CD8-positive, alpha-beta memory T cell (primary cell): ENCODE measurements at regions of chr22 and their contacts with region 1.

Region 1: GRCh38 chr22:17785185-17786184 is 11.2 kb upstream of the BID start:
- DNase-seq: peak; percentile 56 to 80 (median 66)
- H3K4me3 ChIP-seq: no peak overlapping the region
- H3K4me3 Mint-ChIP-seq: peak overlapping the region in 1 of 7 donors; percentile 69
- H3K27ac ChIP-seq: no peak overlapping the region
- H3K27ac Mint-ChIP-seq: peak overlapping the region in 5 of 8 donors; percentile 20 to 74 (median 63)
- H3K4me1 ChIP-seq: peaks cover 21% of the 10 kb centered on the region
- H3K4me1 Mint-ChIP-seq: peaks cover 12 to 25% (median 14%) of the 10 kb centered on the region in 3 donors
- H3K27me3 ChIP-seq: no peaks in the 10 kb centered on the region
- H3K27me3 Mint-ChIP-seq: no peaks in the 10 kb centered on the region

Region 2: GRCh38 chr22:17742527-17742902 is 43.0 kb before region 1 on chr22:
- CTCF ChIA-PET with region 1: interaction called, 110 read pairs
- POLR2A ChIA-PET with region 1: interaction called, 4 read pairs
- DNase-seq: peak; percentile 44 to 75 (median 51)
- H3K4me3 ChIP-seq: no peak overlapping the region
- H3K4me3 Mint-ChIP-seq: no peak overlapping the region
- H3K27ac ChIP-seq: no peak overlapping the region
- H3K27ac Mint-ChIP-seq: peak overlapping the region in 4 of 8 donors; percentile 4 to 80 (median 26)
- H3K4me1 ChIP-seq: no peaks in the 10 kb centered on the region
- H3K4me1 Mint-ChIP-seq: peaks cover 7 to 16% (median 12%) of the 10 kb centered on the region in 3 donors
- H3K27me3 ChIP-seq: no peaks in the 10 kb centered on the region
- H3K27me3 Mint-ChIP-seq: no peaks in the 10 kb centered on the region

Region 3: DNA sequence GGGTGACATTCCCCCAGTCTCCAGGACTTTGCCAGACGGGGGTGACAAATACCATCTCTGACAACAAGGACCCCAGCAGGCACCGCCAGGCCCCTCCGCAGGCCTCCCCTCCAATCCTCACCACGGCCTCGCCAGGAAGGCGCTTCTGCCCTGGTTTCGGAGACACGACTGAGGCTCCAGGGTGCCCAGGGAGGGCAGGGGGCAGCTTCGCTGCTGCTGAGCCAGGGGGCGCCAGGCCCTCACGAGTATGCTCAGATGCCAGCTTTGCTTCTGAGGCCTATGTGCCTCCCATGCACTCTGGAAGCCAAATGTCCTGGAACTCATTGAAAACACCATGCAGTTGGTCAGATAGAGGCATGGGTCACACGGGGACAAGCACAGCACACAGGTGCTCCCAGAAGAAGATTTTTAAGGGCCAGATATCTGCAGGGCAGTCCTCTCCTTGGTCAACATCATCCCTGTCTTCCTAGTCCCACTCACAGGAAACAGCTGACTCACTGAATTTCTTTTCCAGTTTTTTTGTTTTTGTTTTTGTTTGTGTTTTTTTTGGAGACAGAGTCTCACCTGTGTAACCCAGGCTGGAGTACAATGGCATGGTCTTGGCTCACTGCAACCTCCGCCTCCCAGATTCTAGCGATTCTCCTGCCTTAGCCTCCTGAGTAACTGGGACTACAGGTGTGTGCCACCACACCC is 31.1 kb before region 1 on chr22:
- CTCF ChIA-PET with region 1: interaction called, 17 read pairs
- POLR2A ChIA-PET with region 1: no interaction called
- DNase-seq: peak in 1 of 5 donors; percentile 62
- H3K4me3 ChIP-seq: no peak overlapping the region
- H3K4me3 Mint-ChIP-seq: no peak overlapping the region
- H3K27ac ChIP-seq: no peak overlapping the region
- H3K27ac Mint-ChIP-seq: peak overlapping the region in 4 of 8 donors; percentile 21 to 77 (median 64)
- H3K4me1 ChIP-seq: no peaks in the 10 kb centered on the region
- H3K4me1 Mint-ChIP-seq: peaks cover 5 to 28% (median 9%) of the 10 kb centered on the region in 3 donors
- H3K27me3 ChIP-seq: no peaks in the 10 kb centered on the region
- H3K27me3 Mint-ChIP-seq: no peaks in the 10 kb centered on the region

Region 4: DNA sequence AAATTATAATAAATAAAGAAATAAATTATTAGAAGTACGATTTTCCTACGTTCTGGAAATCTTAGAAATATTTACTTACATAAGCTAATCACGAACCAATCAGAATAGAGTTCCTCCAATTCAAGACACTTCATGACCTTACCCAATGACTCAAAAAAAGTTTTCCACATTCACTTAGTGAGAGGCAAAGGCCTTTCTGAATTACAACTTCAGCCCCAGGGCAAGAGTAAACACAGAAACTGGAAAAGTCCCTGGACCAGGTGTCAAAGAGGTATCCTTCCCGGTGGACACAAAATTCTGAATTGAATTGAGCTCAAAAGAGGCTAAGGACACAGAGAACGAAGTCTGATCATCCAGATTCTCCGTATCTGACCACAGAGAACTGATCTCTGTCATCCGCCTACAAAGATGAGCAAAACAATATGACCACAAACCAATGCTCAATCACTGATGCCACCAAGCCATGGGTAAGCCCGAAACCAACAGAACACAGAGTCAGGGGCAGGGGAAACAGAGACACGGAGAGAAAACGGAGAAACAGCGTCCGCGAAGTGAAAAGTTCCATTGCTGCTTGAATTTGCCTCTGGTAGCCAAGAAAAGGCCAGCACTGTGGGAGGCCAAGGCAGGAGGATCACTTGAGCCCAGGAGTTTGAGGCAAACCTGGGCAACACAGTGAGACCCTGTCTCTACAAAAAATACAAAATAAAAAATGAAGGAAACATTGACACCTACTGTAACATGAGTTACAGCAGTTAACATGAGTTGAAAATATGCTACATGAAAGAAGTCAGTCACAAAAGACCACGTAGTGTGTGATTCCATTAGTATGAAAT is 18.0 kb before region 1 on chr22:
- CTCF ChIA-PET with region 1: interaction called, 40 read pairs
- POLR2A ChIA-PET with region 1: no interaction called
- DNase-seq: peak in 3 of 5 donors; percentile 67 to 73 (median 72)
- H3K4me3 ChIP-seq: peak overlapping the region; percentile 26
- H3K4me3 Mint-ChIP-seq: peak overlapping the region; percentile 48 to 79 (median 71)
- H3K27ac ChIP-seq: no peak overlapping the region
- H3K27ac Mint-ChIP-seq: peak overlapping the region; percentile 62 to 99 (median 90)
- H3K4me1 ChIP-seq: peaks cover 26% of the 10 kb centered on the region
- H3K4me1 Mint-ChIP-seq: peaks cover 42 to 58% (median 55%) of the 10 kb centered on the region in 3 donors
- H3K27me3 ChIP-seq: no peaks in the 10 kb centered on the region
- H3K27me3 Mint-ChIP-seq: no peaks in the 10 kb centered on the region

Region 5: DNA sequence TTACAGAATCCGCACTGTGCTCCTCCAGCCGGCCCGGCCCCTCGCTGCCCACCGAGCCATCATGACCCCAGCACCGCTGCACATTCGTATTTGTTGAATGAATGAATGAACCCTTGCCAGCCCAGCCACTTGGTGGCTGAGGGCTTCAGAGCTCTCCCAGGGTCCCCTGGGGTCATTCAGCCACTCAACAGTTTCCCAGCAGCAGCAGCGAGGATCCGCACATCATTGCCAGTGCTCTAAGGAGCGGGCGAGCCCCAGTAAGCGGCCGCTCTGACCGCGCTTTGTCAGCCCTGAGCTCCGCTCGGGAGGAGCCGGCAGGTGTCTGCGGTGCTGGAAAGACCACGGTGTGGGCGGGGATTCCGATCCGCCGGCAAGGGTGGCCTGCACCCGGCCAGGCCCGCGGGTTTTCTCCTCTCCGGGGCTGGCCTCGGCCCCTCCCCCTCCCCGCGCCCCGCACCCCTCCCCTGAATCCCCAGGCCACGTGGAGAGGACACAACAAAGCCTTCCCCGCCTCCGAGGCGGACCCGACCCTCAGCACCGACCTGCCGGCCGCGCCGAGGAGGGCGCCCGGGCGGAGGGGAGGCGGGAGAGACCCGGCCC is 11.8 kb before region 1 on chr22:
- CTCF ChIA-PET with region 1: interaction called, 40 read pairs
- POLR2A ChIA-PET with region 1: interaction called, 10 read pairs
- DNase-seq: peak; percentile 55 to 77 (median 59)
- H3K4me3 ChIP-seq: peak overlapping the region; percentile 70
- H3K4me3 Mint-ChIP-seq: peak overlapping the region; percentile 85 to 95 (median 89)
- H3K27ac ChIP-seq: peak overlapping the region; percentile 38
- H3K27ac Mint-ChIP-seq: peak overlapping the region; percentile 71 to 93 (median 81)
- H3K4me1 ChIP-seq: peaks cover 62% of the 10 kb centered on the region
- H3K4me1 Mint-ChIP-seq: peaks cover 64 to 78% (median 73%) of the 10 kb centered on the region in 3 donors
- H3K27me3 ChIP-seq: no peaks in the 10 kb centered on the region
- H3K27me3 Mint-ChIP-seq: no peaks in the 10 kb centered on the region

Region 6: DNA sequence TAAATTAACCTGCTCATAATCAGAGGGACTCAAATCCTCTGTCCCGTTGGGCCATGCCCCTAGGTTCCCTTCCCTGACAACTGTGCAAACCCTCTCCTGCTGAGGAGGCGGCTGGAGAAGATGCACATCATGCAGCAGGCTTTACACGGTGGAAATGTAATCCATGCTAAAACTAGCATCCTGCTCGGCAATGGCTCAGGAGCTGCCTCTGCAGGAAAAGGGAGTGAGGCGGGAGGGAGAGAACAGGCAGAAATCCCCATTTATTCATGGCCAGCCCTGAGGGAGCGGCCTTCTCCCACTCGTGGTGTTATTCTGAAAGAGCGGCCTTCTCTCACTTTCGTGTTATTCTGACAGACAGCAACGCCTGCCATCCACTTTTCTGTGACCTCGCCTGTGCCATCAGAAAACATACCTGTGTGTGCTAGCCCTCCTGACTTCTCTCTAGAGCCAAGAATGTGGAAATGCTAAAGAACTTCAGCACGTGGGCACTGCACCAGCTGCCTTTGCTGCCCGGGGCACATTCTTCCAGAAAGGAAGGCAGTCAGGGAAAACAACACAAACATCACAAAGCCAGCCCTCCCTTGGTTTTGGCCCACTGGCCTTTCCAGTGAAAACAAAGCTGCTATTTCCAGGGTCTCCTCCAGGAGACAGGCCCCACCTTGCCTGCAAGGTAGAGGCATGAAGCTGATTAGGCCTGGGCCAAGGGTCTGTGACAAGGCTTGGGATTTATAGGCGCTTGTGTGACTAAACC is 51.7 kb after region 1 on chr22:
- CTCF ChIA-PET with region 1: no interaction called
- POLR2A ChIA-PET with region 1: no interaction called
- DNase-seq: no peak
- H3K4me3 ChIP-seq: no peak overlapping the region
- H3K4me3 Mint-ChIP-seq: no peak overlapping the region
- H3K27ac ChIP-seq: no peak overlapping the region
- H3K27ac Mint-ChIP-seq: no peak overlapping the region
- H3K4me1 ChIP-seq: peaks cover 7% of the 10 kb centered on the region
- H3K4me1 Mint-ChIP-seq: peaks cover 0 to 10% (median 4%) of the 10 kb centered on the region in 3 donors
- H3K27me3 ChIP-seq: no peaks in the 10 kb centered on the region
- H3K27me3 Mint-ChIP-seq: no peaks in the 10 kb centered on the region